ENCODE measurements at regions of chr6 and their contacts with region 1.

Region 1: DNA sequence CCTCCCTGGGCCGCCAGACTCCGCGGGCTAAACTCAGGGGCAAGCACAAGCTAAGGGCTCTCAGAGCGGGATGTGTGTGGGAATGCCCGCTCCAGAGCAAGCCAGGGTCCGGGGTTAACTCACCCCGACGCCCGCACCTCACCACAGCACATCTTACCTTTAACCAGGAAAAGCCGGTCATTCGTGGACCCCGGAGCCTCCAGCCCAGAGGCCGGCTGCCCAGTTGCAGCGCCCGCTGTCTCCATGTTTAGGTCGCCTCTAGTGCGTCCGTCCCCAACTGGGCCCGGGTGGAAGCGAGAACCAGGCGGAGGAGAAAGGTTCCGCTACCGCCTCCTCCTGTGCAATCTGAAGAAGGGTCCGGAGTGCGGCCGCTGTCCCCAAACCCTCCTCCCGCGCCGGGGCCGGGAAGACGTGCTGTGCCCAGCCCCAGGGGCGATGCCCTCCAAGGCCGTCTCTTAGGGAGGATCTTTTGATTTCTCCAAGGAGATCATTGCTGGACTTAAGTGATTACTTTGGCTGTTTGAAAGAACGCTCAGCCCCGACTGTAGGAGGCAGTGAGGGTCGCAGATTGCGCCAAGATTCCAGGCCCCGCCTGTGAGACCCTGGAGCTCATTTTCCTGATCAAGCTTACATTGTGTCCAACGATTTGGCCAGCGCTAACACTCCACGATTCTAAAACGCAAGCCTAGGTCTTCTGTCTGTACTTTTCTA is at the start of gene TMEM242:
- DNase-seq: peak; percentile 86
- H3K4me3 Mint-ChIP-seq: peak within 1 kb of the TSS; percentile 99
- H3K27ac Mint-ChIP-seq: peak within 1 kb of the TSS; percentile 91
- H3K4me1 Mint-ChIP-seq: peaks cover 49% of the 10 kb centered on the region
- H3K27me3 Mint-ChIP-seq: peaks cover 16% of the 10 kb centered on the region
- total RNA-seq, gene TMEM242: 10.1 and 12.7 TPM in 2 replicates

Region 2: DNA sequence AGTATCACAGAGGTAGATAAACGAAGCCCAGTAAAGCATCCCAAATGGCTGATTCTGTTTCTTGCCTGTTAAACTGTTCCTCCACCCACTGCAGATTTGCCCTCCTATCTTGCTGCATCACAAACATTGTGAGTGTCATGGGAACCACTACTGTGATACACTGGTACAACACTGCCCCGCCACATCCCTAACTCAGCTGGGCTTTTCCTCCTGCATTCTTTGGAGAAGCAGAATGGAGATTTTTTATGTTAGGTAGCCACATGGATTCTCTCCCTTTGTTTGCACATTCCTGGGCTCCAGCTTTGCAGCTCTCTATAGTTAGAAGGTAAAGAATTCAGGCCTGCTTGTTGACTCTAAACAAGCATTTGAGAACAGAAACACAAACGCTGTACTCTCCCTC is 234.2 kb before region 1 on chr6:
- intact Hi-C with region 1: no loop called
- DNase-seq: no peak
- H3K4me3 Mint-ChIP-seq: no peak overlapping the region
- H3K27ac Mint-ChIP-seq: no peak overlapping the region
- H3K4me1 Mint-ChIP-seq: peaks cover 28% of the 10 kb centered on the region
- H3K27me3 Mint-ChIP-seq: no peaks in the 10 kb centered on the region

Region 3: GRCh38 chr6:157368359-157369049 is 45.1 kb after region 1 on chr6:
- intact Hi-C with region 1: loop called (anchors 2 kb)
- DNase-seq: no peak
- H3K4me3 Mint-ChIP-seq: no peak overlapping the region
- H3K27ac Mint-ChIP-seq: peak overlapping the region; percentile 52
- H3K4me1 Mint-ChIP-seq: peaks cover 20% of the 10 kb centered on the region
- H3K27me3 Mint-ChIP-seq: peaks cover 46% of the 10 kb centered on the region

Region 4: GRCh38 chr6:157428427-157429202 is 105.2 kb after region 1 on chr6:
- intact Hi-C with region 1: loop called (anchors 1 kb)
- DNase-seq: no peak
- H3K4me3 Mint-ChIP-seq: peak overlapping the region; percentile 2
- H3K27ac Mint-ChIP-seq: peak overlapping the region; percentile 77
- H3K4me1 Mint-ChIP-seq: peaks cover 43% of the 10 kb centered on the region
- H3K27me3 Mint-ChIP-seq: peaks cover 3% of the 10 kb centered on the region

Region 5: DNA sequence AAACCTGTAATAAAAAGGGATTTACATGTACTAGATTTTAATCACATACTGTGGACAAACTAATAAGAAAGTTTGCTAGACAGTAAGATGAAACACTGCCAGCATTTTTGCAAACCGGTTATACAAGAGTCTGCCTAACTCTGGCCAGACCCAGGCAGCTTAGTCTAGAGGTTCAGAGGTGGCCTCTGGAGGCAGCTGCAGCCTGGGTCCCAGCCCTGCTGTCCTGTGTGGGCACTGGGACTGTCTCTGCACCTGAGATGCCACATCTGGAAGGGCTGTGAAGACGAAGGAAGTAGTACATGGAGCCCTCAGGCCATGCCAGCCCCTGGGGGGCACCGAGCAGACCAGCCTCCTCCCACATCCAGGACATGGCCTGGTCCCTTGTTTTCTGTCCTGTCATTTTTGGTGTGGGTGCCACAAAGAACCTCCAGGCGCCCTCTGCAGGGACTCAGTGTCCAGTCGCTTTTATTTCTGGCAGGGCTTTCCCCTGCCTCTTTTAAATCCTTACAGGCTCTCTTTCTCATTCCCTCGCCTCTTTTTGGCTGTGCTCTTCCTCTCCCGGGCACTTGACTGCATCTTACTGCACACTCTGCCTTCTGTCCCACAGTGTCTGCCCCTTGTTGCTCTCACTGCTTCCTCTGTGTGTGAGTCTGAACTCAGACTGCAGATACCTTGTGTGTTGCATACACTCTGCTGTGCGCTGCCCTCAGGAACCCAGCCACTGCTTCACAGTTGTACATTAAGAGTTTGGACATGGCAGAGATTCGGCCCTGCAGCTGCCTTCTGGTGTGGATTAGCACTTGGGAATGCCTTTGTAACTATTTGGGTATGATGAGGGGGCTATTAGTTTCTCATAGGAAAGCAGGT is 274.3 kb after region 1 on chr6:
- intact Hi-C with region 1: loop called (anchors 2 kb)
- DNase-seq: no peak
- H3K4me3 Mint-ChIP-seq: no peak overlapping the region
- H3K27ac Mint-ChIP-seq: no peak overlapping the region
- H3K4me1 Mint-ChIP-seq: peaks cover 12% of the 10 kb centered on the region
- H3K27me3 Mint-ChIP-seq: no peaks in the 10 kb centered on the region

Region 6: DNA sequence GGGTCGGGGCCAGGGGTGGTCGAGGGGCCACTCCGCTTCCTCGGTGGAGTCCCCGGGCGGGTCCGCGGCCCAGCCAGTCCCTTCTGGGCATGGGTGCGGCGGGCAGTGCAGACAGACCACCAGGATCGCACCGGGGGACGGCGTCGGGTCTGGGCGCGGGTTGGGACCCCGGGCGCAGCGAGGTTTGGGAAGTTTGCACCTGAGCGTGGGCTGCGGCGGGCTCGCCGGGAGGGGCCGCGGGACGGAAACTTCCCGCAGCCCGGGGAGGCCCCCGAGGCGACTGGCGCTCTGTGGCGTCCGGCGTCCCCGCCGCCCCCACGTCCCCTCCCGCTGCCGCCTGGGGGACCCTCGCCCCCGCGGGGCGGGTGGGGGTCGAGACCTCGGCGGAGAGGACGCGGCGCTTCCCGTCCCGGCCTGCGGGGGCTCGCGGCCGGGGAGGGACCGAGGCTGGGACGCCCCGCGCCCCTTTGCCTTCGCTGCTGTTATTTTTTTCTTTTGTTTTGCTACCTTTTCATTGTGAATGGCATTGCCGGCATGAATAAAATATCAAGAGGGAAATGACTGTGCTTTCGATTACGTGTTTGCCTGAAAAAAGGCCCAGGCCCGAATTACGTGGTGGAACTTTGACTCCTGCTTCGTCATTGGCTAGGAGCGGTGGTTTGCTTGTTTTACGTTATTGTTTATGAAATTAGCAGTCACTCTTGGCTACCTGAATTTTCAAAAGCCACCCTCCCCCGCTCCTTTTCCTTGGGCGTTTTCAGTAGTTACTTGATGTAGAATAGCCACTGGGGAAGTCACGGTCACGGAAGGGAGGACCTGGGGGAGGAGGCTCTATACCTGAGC is 500.3 kb after region 1 on chr6:
- intact Hi-C with region 1: loop called (anchors 2 kb)
- DNase-seq: peak; percentile 72
- H3K4me3 Mint-ChIP-seq: peak overlapping the region; percentile 93
- H3K27ac Mint-ChIP-seq: peak overlapping the region; percentile 97
- H3K4me1 Mint-ChIP-seq: peaks cover 47% of the 10 kb centered on the region
- H3K27me3 Mint-ChIP-seq: peaks cover 34% of the 10 kb centered on the region

Region 7: GRCh38 chr6:158869826-158870648 is 1546.6 kb after region 1 on chr6:
- intact Hi-C with region 1: no loop called
- DNase-seq: peak; percentile 94
- H3K4me3 Mint-ChIP-seq: peak overlapping the region; percentile 87
- H3K27ac Mint-ChIP-seq: peak overlapping the region; percentile 99
- H3K4me1 Mint-ChIP-seq: peaks cover 37% of the 10 kb centered on the region
- H3K27me3 Mint-ChIP-seq: peaks cover 5% of the 10 kb centered on the region